Prostate gland (tissue), 2 donors: ENCODE measurements at regions of chr7 and their contacts with region 1.

Region 1: GRCh38 chr7:47453093-47454049 is 128.5 kb downstream of the TNS3 start:
- DNase-seq: peak; percentile 22
- H3K4me3 ChIP-seq: peak overlapping the region in 1 of 2 donors; percentile 2
- H3K27ac ChIP-seq: peak overlapping the region; percentile 47 to 55
- H3K4me1 ChIP-seq: no peaks in the 10 kb centered on the region
- H3K27me3 ChIP-seq: no peaks in the 10 kb centered on the region
- CTCF ChIP-seq: no peak
- POLR2A ChIP-seq: no peak

Region 2: DNA sequence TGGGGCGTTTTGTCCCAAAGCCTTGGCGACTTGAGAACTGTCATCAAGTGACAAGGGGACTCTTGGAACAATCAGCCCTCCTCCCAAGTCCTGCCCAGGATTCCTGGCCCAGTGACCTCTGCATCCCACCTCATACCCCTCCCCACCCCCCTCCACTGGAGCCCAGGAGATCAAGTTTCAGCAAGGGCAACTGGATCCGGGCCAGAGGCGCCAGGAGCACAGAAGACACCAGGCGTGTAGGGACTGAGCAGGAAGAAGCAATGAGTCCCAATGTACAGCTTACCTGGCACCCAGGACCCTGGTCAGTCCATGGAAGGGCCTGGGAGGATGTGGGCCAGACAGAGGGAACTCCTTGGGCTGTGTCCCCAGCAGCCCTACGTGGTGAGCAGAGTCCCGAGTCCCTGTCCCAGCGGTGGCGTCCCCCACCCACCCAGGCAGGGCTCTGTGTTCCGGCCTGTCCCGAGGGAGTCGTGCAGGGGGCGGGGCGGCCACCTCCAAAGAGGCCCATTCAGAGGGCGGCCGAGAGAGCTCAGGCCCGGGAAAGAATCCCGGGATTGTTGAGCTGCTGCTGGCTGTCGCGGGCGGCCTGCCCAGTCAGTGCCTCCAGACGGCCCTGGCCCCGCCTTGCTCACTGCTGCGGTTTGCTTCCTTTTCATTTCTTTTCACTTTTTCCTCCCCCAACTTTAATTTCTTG is 125.5 kb before region 1 on chr7:
- intact Hi-C with region 1: no loop called
- DNase-seq: peak; percentile 71
- H3K4me3 ChIP-seq: peak overlapping the region in 1 of 2 donors; percentile 9
- H3K27ac ChIP-seq: peak overlapping the region; percentile 40 to 70
- H3K4me1 ChIP-seq: peaks cover 11% of the 10 kb centered on the region
- H3K27me3 ChIP-seq: no peaks in the 10 kb centered on the region
- CTCF ChIP-seq: no peak
- POLR2A ChIP-seq: no peak

Region 3: DNA sequence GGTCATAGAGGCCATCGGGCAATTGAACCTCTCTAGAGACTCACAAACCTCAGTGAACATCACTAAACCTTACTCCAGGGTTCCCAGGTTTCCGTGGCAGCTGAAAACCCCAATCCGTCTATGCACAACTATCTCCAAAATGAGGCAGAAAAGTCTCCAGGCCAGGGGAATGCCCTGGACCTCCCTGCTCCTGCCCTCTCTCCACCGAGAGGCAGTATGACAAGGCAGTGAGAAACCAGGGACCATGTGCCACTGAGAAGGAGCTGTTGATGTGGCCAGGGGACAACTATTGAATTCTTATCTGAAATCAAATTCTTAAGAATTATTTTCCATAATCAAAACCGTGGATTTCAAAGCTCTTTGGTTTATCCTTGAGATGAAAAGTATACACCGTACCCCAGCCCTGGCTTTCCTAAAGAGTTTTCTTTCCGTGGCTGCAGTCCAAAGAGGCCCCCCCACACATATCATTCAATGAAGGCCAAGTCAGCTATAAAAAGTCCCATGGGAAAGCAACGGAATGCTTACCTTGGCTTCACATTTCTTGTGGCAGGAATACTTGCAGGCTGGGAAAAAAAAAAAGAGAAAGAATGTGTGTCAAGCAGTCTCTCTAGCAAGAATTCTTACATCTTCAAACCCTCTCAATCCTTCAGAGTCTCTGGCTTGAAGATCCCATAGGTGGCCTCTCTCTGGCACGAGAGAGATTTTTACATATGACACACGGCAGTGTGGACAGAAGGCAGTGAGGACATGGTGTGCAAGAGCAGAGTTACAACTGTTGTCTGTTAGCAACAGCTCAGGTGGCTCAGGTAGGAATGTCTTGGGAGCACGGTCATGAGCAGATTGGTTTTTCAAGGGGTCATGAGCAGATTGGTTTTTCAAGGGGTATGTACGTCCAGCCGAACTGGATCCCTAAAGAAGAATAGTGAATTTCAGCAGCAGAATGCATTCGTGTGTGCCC is 53.3 kb after region 1 on chr7:
- intact Hi-C with region 1: loop called (anchors 5 kb)
- DNase-seq: no peak
- H3K4me3 ChIP-seq: no peak overlapping the region
- H3K27ac ChIP-seq: no peak overlapping the region
- H3K4me1 ChIP-seq: no peaks in the 10 kb centered on the region
- H3K27me3 ChIP-seq: no peaks in the 10 kb centered on the region
- CTCF ChIP-seq: no peak
- POLR2A ChIP-seq: no peak